AG04449 (cell line): ENCODE measurements at regions of chrX and their contacts with region 1.

Region 1: GRCh38 chrX:129637217-129638109 is 17.3 kb downstream of the APLN start:
- DNase-seq: no peak
- H3K4me3 ChIP-seq: no peak overlapping the region
- CTCF ChIP-seq: peak; percentile 72

Region 2: GRCh38 chrX:129622757-129623341 is 14.6 kb before region 1 on chrX:
- CTCF ChIA-PET with region 1: interaction called, 35 read pairs
- POLR2A ChIA-PET with region 1: no interaction called
- DNase-seq: no peak
- H3K4me3 ChIP-seq: no peak overlapping the region
- CTCF ChIP-seq: no peak

Region 3: DNA sequence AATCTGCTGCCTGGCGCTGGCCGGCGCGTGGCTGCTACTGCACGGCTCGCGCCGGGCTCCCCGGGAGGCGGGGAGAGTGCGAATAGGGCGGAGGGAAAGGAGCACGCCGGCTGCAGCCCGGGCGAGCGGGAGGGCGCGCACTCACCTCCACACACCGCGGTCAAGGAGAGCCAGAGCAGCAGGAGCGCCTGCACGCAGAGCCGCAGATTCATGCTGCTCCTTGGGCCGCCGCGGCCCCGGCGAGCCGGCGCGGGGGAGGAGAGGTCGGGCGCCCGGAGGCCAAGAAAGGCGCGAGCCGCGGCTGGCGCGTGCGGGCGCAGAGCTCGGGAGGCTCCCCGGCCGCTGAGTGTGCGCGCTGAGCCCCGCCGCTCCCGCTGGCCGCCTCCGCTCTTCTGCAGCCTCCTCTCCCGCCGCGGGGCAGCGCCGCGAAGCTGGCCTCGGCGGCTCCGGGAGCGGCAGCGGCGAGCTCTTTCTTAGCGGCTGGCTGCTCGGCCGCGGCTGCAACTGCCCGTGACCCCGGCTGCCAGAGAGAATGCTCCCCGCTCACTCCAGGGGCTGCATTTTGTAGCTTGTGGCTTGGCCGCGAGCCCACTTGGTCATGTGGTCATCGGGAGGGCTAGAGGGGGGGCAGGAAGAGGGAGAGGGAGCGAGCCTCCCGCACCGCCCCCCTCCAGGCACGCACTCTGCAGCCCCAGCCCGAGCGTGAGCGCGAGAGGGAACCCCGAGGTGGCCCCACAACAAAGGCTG is 17.1 kb after region 1 on chrX and contains the start of gene APLN:
- CTCF ChIA-PET with region 1: interaction called, 15 read pairs
- POLR2A ChIA-PET with region 1: no interaction called
- DNase-seq: no peak
- H3K4me3 ChIP-seq: peak within 1 kb of the TSS; percentile 51
- CTCF ChIP-seq: no peak

Region 4: DNA sequence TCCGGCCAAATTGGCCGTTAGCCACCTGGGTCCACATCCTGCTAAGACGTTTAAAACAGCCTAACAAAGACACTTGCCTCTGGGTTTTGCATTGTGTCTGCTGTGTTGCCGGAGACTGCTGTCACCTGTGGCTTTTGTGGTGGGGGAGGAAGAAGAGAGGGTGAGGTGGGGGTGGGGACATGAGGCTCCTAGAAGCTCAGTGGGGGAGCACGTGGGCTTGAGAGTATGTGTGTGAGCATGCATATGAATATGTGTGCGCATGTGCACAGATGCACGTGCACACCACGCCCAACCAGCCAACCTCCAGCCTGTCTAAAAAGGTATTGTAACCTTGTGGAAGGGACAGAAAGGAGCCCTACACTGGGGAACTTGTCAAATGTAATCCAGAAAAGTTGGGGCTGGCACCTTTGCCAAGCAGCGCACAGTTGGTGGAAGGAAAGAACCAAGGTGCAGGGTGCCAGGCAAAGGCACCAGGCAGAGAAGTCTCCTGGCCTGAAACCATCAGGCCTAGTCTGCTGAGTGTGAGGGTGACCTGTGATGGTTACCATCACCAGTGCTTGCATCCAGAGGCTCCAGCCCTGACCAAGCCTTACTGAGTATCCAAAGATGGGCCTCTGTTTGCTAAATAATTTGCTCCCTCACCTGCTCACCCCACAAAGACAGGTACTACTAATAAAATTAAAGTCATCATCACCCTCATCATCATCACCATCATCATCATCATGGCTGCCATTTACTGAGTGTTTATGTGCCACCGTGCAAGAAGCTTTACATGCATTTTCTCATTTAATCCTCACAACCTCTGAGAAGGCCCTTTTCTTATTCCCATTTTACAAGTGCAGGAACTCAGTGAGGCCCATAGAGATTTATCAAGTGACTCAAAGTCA is 132.2 kb after region 1 on chrX:
- CTCF ChIA-PET with region 1: no interaction called
- POLR2A ChIA-PET with region 1: no interaction called
- DNase-seq: no peak
- H3K4me3 ChIP-seq: no peak overlapping the region
- CTCF ChIP-seq: no peak